Adrenal gland (tissue), 19 donors: ENCODE measurements at regions of chr15 and their contacts with region 1.

Region 1: GRCh38 chr15:63396152-63396928 is 14.7 kb upstream of the CA12 start:
- DNase-seq: no peak
- H3K4me3 ChIP-seq: no peak overlapping the region
- H3K27ac ChIP-seq: no peak overlapping the region
- H3K4me1 ChIP-seq: no peaks in the 10 kb centered on the region
- H3K27me3 ChIP-seq: no peaks in the 10 kb centered on the region
- CTCF ChIP-seq: no peak
- POLR2A ChIP-seq: no peak

Region 2: DNA sequence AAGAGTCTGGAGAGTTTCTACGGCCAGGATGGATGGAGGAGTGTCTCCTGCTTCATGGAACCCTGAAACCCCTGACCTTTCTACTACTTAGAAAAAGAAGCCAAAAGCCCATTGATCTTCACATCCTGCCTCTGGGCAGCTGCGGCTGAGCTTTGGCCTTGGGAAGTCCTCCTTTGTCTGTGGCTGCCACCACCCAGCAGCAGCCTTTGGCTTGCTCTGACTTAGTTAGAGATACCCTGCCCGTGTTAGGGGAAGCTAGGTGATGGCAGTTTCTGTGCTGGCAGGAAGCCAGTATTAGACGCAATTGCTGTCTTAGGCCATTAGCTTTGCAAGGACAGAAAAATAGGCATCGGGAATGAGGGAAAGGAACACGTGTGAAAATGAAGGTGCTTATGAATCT is 100.1 kb before region 1 on chr15:
- intact Hi-C with region 1: loop called in 1 of 2 experiments (anchors 5 kb)
- DNase-seq: peak; percentile 44 to 72 (median 65)
- H3K4me3 ChIP-seq: no peak overlapping the region
- H3K27ac ChIP-seq: peak overlapping the region in 1 of 5 donors; percentile 18
- H3K4me1 ChIP-seq: peaks cover 19 to 24% of the 10 kb centered on the region in 2 donors
- H3K27me3 ChIP-seq: no peaks in the 10 kb centered on the region
- CTCF ChIP-seq: no peak
- POLR2A ChIP-seq: no peak